GM10248 (cell line): ENCODE measurements at regions of chr1 and their contacts with region 1.

Region 1: DNA sequence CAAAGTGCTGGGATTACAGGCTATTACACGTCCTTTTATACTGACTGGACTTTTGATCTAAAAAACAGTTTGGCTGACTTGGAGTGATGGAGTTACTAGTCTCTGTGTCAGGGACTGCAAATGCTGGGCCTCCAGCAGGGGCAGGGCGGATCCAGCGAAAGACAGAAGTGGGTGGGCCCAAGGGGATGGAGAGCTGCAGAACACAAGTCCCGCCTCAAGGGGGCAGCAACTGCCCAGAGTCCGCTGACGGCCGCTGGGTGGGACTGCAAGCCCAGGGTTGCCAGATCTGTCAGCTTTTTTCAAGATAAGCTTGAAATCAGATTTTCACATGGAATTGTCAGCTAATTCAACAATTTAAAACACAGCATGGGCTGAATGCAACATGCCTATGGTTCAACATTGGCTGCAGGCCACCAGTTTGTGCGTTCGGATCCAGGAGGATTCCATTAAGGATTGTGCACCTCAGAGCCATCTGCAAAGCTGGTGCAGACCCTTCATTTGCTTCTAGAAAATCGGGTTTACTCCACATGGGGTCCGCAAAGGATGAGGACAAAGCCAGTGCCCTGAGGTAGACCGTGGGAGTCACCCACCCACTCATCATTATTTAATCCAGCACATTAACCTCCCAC is 10.7 kb downstream of the STMN1 start:
- DNase-seq: peak; percentile 96
- CTCF ChIP-seq: peak; percentile 96

Region 2: GRCh38 chr1:25239681-25240541 is 655.6 kb before region 1 on chr1:
- CTCF ChIA-PET with region 1: no interaction called
- POLR2A ChIA-PET with region 1: no interaction called
- DNase-seq: peak; percentile 86
- CTCF ChIP-seq: peak; percentile 50

Region 3: GRCh38 chr1:25863123-25863876 is 32.2 kb before region 1 on chr1:
- CTCF ChIA-PET with region 1: interaction called, 10 read pairs
- POLR2A ChIA-PET with region 1: no interaction called
- DNase-seq: no peak
- CTCF ChIP-seq: no peak

Region 4: GRCh38 chr1:25912076-25912831 is 16.8 kb after region 1 on chr1:
- CTCF ChIA-PET with region 1: interaction called, 35 read pairs
- POLR2A ChIA-PET with region 1: no interaction called
- DNase-seq: no peak
- CTCF ChIP-seq: no peak

Region 5: GRCh38 chr1:25971066-25971810 is 75.8 kb after region 1 on chr1:
- CTCF ChIA-PET with region 1: interaction called, 13 read pairs
- POLR2A ChIA-PET with region 1: no interaction called
- DNase-seq: peak; percentile 65
- CTCF ChIP-seq: no peak

Region 6: GRCh38 chr1:25990702-25991395 is 95.4 kb after region 1 on chr1:
- CTCF ChIA-PET with region 1: interaction called, 357 read pairs
- POLR2A ChIA-PET with region 1: no interaction called
- DNase-seq: no peak
- CTCF ChIP-seq: no peak

Region 7: GRCh38 chr1:26009796-26010460 is 114.4 kb after region 1 on chr1:
- CTCF ChIA-PET with region 1: interaction called, 357 read pairs
- POLR2A ChIA-PET with region 1: no interaction called
- DNase-seq: no peak
- CTCF ChIP-seq: no peak

Region 8: GRCh38 chr1:26053718-26054560 is 158.5 kb after region 1 on chr1:
- CTCF ChIA-PET with region 1: no interaction called
- POLR2A ChIA-PET with region 1: no interaction called
- DNase-seq: no peak
- CTCF ChIP-seq: no peak